ENCODE measurements at regions of chr20 and their contacts with region 1.

Region 1: DNA sequence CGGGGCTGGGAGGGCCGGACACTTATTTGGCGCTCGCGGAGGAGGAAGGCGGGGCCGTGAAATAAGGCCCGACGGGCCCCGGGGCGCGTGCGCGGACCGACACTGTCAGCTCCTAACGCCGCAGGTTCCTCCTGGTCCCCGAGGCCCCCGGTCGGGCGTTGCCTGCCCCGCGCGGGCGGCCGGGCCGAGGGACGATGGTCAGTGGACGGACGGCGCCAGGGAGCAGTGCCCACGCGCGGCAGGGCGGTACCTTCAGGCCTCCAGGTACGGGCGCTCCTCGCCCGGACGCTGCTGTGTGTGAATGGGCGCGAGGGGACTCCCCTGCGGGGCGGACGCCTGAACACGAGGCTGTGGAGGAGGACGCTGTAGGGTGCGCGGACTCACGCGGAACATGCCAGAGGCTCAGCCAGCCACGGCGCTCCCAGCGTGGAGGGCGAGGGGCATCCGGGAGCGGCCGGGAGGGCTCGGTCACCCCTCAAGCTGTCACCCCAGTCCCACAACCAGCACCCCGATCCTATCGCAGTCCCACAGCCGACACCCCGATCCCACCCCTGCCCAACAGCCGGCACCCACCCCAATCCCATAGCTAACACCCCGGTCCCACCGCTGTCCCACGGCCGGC is 339 bp upstream of the GMEB2 start:
- DNase-seq: peak; percentile 74 to 99 (median 97)
- ATAC-seq: peak; percentile 93
- H3K4me3 ChIP-seq: peak overlapping the region; percentile 96
- H3K4me3 Mint-ChIP-seq: peak overlapping the region; percentile 93 to 99 (median 98)
- H3K27ac ChIP-seq: peak overlapping the region; percentile 85
- H3K27ac Mint-ChIP-seq: peak overlapping the region; percentile 79 to 98 (median 95)
- H3K4me1 ChIP-seq: peaks cover 29 to 40% of the 10 kb centered on the region in 2 donors
- H3K4me1 Mint-ChIP-seq: peaks cover 28 to 64% (median 42%) of the 10 kb centered on the region in 7 donors
- H3K27me3 ChIP-seq: no peaks in the 10 kb centered on the region
- H3K27me3 Mint-ChIP-seq: no peaks in the 10 kb centered on the region

Region 2: DNA sequence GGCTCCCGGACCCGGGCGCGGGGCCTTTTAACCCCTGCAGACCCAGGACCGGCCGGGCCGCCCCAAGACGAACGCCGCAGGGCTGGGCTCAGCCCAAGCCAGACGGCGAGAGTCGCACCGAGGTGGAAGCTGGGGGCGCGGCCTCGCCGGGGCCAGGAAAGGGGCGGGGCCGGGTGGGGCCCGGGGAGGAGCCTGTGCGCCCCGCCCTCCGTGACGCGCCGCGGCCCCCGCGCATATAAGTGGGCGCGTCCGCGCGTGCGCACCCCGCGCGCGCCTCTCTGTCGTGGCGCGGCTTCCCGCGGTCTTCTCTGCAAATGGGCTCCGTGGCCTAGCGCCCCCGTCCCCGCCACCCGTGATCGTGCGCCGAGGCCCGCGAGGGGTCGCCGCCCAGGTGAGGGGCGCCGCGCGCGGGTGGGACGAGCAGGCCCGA is 106.7 kb before region 1 on chr20 and contains the start of gene PPDPF:
- CTCF ChIA-PET with region 1: no interaction called
- POLR2A ChIA-PET with region 1: interaction called, 9 read pairs
- intact Hi-C with region 1: loop called in 1 of 2 experiments (anchors 1 kb)
- DNase-seq: peak; percentile 76 to 92 (median 84)
- ATAC-seq: peak; percentile 96
- H3K4me3 ChIP-seq: peak within 1 kb of the TSS; percentile 86
- H3K4me3 Mint-ChIP-seq: peak within 1 kb of the TSS; percentile 65 to 89 (median 81)
- H3K27ac ChIP-seq: peak within 1 kb of the TSS; percentile 88
- H3K27ac Mint-ChIP-seq: peak within 1 kb of the TSS in 7 of 9 donors; percentile 51 to 88 (median 79)
- H3K4me1 ChIP-seq: peaks cover 11 to 14% of the 10 kb centered on the region in 2 donors
- H3K4me1 Mint-ChIP-seq: peaks cover 4 to 22% (median 9%) of the 10 kb centered on the region in 7 donors
- H3K27me3 ChIP-seq: no peaks in the 10 kb centered on the region
- H3K27me3 Mint-ChIP-seq: peaks cover 0 to 7% (median 0%) of the 10 kb centered on the region in 5 donors
- total RNA-seq, gene PPDPF: 138 to 225 (median 184) TPM

Region 3: DNA sequence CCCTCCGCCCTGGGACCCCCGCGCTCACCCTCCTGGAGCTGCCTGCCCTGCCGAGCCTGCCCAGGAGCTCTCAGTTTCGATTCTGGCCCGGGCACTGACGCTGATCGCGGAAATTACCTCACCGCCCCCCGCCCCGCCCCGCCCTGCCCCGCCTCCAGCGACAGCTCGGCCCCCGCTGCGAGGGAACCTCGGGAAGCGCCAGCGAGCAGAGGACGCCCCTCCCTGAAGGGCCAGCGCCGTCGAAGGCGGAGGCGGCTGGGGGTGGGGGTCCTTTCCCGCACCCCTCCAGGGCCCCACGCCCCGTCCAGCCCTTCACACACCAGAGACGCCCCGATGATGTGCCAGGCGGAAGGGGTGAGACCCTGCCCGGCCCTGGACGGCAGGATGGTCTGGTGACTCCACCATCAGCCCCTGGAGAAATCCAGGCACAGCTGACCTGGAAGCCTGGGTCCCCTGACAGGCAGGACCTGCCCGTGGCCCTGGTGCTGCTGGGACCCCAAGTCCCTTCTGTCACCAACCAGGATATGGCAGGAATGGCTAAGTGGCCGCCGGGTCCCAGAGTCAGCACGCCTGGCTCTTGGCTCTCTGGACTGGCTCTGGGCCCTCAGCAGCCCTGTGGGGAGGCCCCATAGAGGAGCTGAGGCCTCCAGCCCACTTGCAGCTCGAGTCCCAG is 52.9 kb before region 1 on chr20 and contains the start of gene HELZ2:
- CTCF ChIA-PET with region 1: no interaction called
- POLR2A ChIA-PET with region 1: no interaction called
- intact Hi-C with region 1: loop called in 1 of 2 experiments (anchors 1 kb)
- DNase-seq: peak in 8 of 9 donors; percentile 32 to 58 (median 44)
- ATAC-seq: peak; percentile 91
- H3K4me3 ChIP-seq: peak within 1 kb of the TSS; percentile 53
- H3K4me3 Mint-ChIP-seq: peak within 1 kb of the TSS; percentile 67 to 89 (median 82)
- H3K27ac ChIP-seq: peak within 1 kb of the TSS; percentile 58
- H3K27ac Mint-ChIP-seq: peak within 1 kb of the TSS in 8 of 9 donors; percentile 14 to 92 (median 54)
- H3K4me1 ChIP-seq: peaks cover 12 to 14% of the 10 kb centered on the region in 2 donors
- H3K4me1 Mint-ChIP-seq: peaks cover 2 to 14% (median 5%) of the 10 kb centered on the region in 7 donors
- H3K27me3 ChIP-seq: no peaks in the 10 kb centered on the region
- H3K27me3 Mint-ChIP-seq: peaks cover 0 to 22% (median 0%) of the 10 kb centered on the region in 5 donors
- total RNA-seq, gene HELZ2: 24.4 to 102 (median 42.1) TPM

Region 4: GRCh38 chr20:63612276-63612928 is 14.8 kb before region 1 on chr20:
- CTCF ChIA-PET with region 1: no interaction called
- POLR2A ChIA-PET with region 1: interaction called, 24 read pairs
- intact Hi-C with region 1: no loop called
- DNase-seq: no peak
- ATAC-seq: peak; percentile 84
- H3K4me3 ChIP-seq: no peak overlapping the region
- H3K4me3 Mint-ChIP-seq: no peak overlapping the region
- H3K27ac ChIP-seq: no peak overlapping the region
- H3K27ac Mint-ChIP-seq: no peak overlapping the region
- H3K4me1 ChIP-seq: no peaks in the 10 kb centered on the region
- H3K4me1 Mint-ChIP-seq: peaks cover 0 to 20% (median 11%) of the 10 kb centered on the region in 7 donors
- H3K27me3 ChIP-seq: no peaks in the 10 kb centered on the region
- H3K27me3 Mint-ChIP-seq: no peaks in the 10 kb centered on the region

Region 5: GRCh38 chr20:63739130-63740069 is 112.2 kb after region 1 on chr20 and contains the start of gene SLC2A4RG:
- CTCF ChIA-PET with region 1: no interaction called
- POLR2A ChIA-PET with region 1: interaction called, 3 read pairs
- intact Hi-C with region 1: loop called in 1 of 2 experiments (anchors 2 kb)
- DNase-seq: peak; percentile 49 to 86 (median 69)
- ATAC-seq: peak; percentile 62
- H3K4me3 ChIP-seq: peak within 1 kb of the TSS; percentile 99
- H3K4me3 Mint-ChIP-seq: peak within 1 kb of the TSS; percentile 33 to 92 (median 80)
- H3K27ac ChIP-seq: peak within 1 kb of the TSS; percentile 71
- H3K27ac Mint-ChIP-seq: peak within 1 kb of the TSS in 1 of 9 donors; percentile 38
- H3K4me1 ChIP-seq: peaks cover 21 to 29% of the 10 kb centered on the region in 2 donors
- H3K4me1 Mint-ChIP-seq: peaks cover 7 to 20% (median 16%) of the 10 kb centered on the region in 7 donors
- H3K27me3 ChIP-seq: no peaks in the 10 kb centered on the region
- H3K27me3 Mint-ChIP-seq: no peaks in the 10 kb centered on the region
- total RNA-seq, gene SLC2A4RG: 88.7 to 136 (median 111) TPM

Measured in naive thymus-derived CD4-positive, alpha-beta T cell (primary cell).